Posterior vena cava (tissue), 2 donors: ENCODE measurements at regions of chr7 and their contacts with region 1.

Region 1: GRCh38 chr7:98826387-98827231 is 43.2 kb downstream of the TMEM130 start:
- DNase-seq: no peak

Region 2: DNA sequence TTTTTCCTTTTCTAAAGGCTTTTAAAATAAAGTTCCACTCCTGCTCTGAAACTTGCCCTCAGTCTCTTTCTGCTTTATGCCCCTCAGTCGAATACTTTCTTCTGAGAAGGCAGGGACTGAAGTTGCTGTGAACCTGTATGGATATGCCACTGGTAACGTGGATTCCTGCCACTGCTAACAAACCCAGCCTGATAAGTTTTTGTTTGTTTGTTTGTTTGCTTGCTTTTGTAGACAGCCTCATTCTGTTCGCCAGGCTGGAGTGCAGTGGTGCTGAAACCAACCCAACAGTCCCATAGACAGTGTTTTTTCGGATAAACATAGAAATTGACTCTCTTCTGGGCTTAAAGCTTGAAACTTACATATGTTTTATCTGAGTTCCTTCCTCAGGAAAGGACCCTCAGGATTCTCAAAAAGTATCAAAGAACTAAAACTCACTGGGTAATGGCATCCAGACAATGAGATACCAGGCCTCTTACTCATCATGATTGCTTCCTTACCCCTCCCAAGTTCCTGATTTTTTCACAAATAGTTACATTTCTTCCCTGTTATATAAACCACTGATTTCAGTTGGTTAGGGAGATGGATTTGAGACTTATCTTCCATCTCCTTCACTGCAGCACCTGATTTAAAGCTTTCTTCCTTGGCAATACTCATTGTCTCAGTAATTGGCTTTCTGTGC is 1435.6 kb before region 1 on chr7:
- intact Hi-C with region 1: no loop called
- DNase-seq: no peak

Region 3: DNA sequence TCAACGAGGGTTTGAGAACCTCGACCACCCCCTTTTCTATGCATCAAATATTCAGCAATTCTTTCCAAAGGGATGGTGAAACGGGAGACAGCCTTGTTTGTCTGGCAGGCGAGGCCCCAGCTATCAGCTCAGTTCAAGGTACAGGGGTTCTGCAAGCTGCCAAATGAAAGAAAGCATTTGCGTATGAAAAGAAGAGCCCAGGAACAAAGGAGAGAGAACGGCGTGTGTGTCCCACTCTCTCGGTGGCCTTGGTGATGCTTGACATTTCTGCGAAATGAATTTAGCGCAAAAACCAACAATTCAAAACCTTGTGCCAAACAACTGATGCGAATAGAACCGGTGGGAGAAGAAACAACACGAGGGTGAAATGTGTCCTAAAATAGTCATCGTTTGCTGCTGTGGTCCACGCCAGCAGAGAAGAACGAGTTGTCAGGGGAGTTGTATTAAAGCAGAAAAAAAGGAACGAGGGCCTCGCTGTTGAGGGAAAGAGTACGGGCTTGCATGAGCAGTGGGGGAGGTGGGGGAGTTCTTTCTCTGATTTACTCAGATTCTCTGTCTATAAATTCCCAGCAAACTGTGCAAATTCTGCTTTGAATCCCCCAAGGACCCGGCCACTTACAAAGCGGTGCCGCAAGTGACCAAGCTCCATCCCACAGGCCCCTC is 54.5 kb before region 1 on chr7:
- intact Hi-C with region 1: no loop called
- DNase-seq: no peak

Region 4: DNA sequence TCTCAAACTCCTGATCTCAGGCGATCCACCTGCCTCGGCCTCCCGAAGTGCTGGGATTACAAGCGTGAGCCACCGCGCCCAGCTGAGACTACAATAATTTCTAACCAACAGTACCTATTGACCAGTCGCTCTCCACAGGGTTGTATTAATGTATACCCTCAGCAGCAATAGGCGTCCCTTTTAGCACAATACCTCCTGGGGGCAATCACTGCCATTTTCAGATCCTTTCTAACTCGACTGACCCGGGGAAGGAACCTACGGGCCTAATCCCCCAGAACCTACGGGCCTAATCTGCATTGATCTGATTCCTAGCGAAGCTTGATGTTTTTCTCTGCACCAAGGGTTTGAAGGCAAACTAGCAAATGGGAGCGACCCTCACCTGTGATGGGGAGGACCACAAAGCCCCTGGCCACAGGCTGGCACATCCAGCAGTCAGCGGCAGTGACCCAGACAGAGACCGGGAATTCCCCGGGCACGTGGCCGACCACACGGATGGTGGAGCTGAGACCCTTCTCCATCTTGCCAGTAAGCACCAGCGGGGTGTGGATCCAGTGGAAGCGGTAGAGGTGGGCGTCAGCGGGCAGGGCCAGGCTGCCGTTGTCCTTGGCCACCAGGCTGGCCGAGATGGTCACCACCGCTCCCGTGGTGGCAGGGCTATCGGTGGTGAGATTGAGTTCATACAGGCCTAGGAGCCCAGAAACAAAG is 36.3 kb after region 1 on chr7:
- intact Hi-C with region 1: loop called in 1 of 2 experiments (anchors 1 kb)
- DNase-seq: no peak

Region 5: GRCh38 chr7:98869597-98870120 is 43.0 kb after region 1 on chr7 and contains the start of gene TMEM130:
- intact Hi-C with region 1: loop called in 1 of 2 experiments (anchors 2 kb)
- DNase-seq: peak; percentile 74
- total RNA-seq, gene TMEM130: 0.62 to 1.6 TPM